ENCODE measurements at regions of chr9 and their contacts with region 1.

Region 1: DNA sequence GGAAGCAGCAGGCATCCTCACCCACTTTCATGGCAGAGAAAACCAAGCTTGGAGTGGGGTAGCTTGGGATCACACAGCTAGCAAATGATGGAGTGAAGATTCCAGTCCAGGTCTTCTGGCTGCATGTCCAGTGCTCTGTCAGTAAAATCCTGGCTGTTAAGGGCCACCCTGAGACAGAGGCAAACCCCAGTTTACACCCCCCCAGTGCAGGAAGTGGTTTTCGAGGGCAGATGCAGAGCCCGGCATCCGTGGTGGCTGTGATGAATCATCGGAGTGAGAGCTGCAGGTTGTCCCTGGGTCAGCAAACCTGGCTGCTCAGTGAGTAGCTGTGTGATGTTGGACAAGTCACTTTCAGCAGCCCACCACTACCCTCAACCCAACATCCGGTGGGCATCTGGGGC is 115.4 kb downstream of the RGS3 start:
- DNase-seq: peak; percentile 95
- H3K4me3 Mint-ChIP-seq: peak overlapping the region; percentile 81
- H3K27ac Mint-ChIP-seq: peak overlapping the region; percentile 92
- H3K4me1 Mint-ChIP-seq: peaks cover 70% of the 10 kb centered on the region
- H3K27me3 Mint-ChIP-seq: no peaks in the 10 kb centered on the region

Region 2: GRCh38 chr9:113150670-113151611 is 427.9 kb before region 1 on chr9 and contains the start of gene SLC31A2:
- CTCF ChIA-PET with region 1: no interaction called
- intact Hi-C with region 1: loop called (anchors 5 kb)
- DNase-seq: peak; percentile 87
- H3K4me3 Mint-ChIP-seq: peak within 1 kb of the TSS; percentile 71
- H3K27ac Mint-ChIP-seq: no peak within 1 kb of the TSS
- H3K4me1 Mint-ChIP-seq: peaks cover 23% of the 10 kb centered on the region
- H3K27me3 Mint-ChIP-seq: no peaks in the 10 kb centered on the region
- total RNA-seq, gene SLC31A2: 1.2 to 1.7 TPM

Region 3: GRCh38 chr9:113309204-113309813 is 269.6 kb before region 1 on chr9:
- CTCF ChIA-PET with region 1: no interaction called
- intact Hi-C with region 1: loop called (anchors 1 kb)
- DNase-seq: peak; percentile 53
- H3K4me3 Mint-ChIP-seq: no peak overlapping the region
- H3K27ac Mint-ChIP-seq: no peak overlapping the region
- H3K4me1 Mint-ChIP-seq: no peaks in the 10 kb centered on the region
- H3K27me3 Mint-ChIP-seq: no peaks in the 10 kb centered on the region

Region 4: DNA sequence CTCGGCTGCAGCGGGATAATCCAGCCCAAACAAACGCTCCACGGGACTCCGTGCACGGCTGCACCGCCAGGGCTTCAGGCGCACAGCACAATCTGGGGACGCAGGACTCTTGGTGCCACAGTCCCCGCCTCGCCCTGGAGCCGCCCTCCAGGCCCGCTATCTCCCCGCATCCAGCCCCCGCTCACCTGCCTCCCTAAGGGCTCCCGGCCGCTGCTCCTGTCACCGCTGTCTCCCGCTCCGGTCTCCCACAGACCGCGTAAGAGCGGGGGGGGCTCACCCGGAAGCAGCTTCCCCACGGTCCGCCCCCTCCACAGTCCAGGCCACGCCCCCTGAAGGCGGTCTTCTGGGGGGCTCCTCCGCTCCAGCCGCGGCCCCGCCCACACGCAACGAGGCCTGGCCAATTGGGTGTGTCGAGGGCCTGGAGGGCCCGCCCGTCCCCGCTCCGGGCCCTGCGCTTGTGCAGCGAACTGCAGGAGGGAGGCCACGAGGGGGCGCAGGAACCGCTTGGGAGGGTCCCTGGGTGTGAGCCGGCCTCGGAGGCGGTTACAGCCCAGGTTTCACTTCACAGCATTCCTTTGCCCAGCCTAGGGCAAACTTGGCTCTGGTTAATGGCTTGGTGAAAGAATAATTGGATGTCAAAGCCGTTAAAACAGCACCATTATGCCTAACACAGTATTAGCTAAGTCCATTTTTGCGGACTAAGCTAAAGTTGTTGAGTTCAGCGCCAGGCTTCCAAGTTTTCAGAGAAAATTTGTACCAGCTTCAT is 177.7 kb before region 1 on chr9 and contains the start of gene ALAD:
- CTCF ChIA-PET with region 1: interaction called, 12 read pairs
- intact Hi-C with region 1: loop called (anchors 2 kb)
- DNase-seq: peak; percentile 99
- H3K4me3 Mint-ChIP-seq: peak within 1 kb of the TSS; percentile 93
- H3K27ac Mint-ChIP-seq: no peak within 1 kb of the TSS
- H3K4me1 Mint-ChIP-seq: peaks cover 20% of the 10 kb centered on the region
- H3K27me3 Mint-ChIP-seq: no peaks in the 10 kb centered on the region
- total RNA-seq, gene ALAD: 16.1 to 17.7 TPM

Region 5: GRCh38 chr9:113454914-113455761 is 123.7 kb before region 1 on chr9:
- CTCF ChIA-PET with region 1: interaction called, 9 read pairs
- intact Hi-C with region 1: loop called (anchors 2 kb)
- DNase-seq: peak; percentile 31
- H3K4me3 Mint-ChIP-seq: no peak overlapping the region
- H3K27ac Mint-ChIP-seq: no peak overlapping the region
- H3K4me1 Mint-ChIP-seq: peaks cover 4% of the 10 kb centered on the region
- H3K27me3 Mint-ChIP-seq: no peaks in the 10 kb centered on the region

Region 6: DNA sequence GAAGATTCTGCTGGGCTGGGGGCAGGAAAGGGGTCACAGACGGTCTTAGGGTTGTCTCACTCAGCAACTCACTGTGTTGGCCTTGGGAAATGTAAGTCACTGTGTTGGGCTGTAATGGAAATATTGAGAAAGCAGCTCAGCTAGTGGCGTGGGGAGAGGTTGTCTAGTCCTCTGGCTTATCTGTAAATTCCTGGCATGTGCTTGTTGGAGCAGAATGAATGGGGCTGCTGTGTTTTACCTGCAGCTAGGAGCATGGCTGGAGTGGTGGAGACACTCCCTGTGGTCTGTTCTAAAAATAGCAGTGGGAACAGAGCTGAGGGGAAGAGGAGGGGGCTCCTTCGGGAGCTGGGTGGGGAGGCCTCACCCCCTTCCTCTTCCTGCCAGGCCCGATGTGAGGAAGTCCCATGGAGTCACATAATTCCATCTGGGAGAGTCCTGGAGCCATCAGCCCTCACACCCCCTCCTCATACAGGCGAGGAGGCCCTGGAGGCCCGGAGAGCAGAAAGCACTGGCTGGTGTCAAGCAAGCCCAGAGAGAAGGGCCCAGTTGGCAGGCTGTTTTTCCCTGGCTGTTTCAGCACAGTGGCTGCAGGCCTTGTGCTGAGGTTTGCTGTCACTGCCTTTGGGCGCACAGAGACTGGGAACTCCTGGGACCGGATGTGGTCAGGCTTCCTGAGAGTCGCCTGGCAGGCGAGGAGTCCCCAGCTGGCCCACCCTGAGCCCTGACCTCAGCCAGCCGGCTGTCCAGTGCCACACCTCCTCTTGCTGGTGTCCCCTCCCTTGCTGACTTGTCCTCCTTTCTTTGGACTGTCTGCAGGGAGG is 30.5 kb before region 1 on chr9:
- CTCF ChIA-PET with region 1: interaction called, 3 read pairs
- intact Hi-C with region 1: loop called (anchors 2 kb)
- DNase-seq: peak; percentile 32
- H3K4me3 Mint-ChIP-seq: no peak overlapping the region
- H3K27ac Mint-ChIP-seq: peak overlapping the region; percentile 87
- H3K4me1 Mint-ChIP-seq: peaks cover 23% of the 10 kb centered on the region
- H3K27me3 Mint-ChIP-seq: no peaks in the 10 kb centered on the region

Region 7: GRCh38 chr9:113622600-113623400 is 43.9 kb after region 1 on chr9:
- CTCF ChIA-PET with region 1: interaction called, 3 read pairs
- intact Hi-C with region 1: loop called (anchors 1 kb)
- DNase-seq: peak; percentile 84
- H3K4me3 Mint-ChIP-seq: peak overlapping the region; percentile 14
- H3K27ac Mint-ChIP-seq: peak overlapping the region; percentile 86
- H3K4me1 Mint-ChIP-seq: peaks cover 34% of the 10 kb centered on the region
- H3K27me3 Mint-ChIP-seq: peaks cover 2% of the 10 kb centered on the region